ENCODE measurements at regions of chr17 and their contacts with region 1.

Region 1: DNA sequence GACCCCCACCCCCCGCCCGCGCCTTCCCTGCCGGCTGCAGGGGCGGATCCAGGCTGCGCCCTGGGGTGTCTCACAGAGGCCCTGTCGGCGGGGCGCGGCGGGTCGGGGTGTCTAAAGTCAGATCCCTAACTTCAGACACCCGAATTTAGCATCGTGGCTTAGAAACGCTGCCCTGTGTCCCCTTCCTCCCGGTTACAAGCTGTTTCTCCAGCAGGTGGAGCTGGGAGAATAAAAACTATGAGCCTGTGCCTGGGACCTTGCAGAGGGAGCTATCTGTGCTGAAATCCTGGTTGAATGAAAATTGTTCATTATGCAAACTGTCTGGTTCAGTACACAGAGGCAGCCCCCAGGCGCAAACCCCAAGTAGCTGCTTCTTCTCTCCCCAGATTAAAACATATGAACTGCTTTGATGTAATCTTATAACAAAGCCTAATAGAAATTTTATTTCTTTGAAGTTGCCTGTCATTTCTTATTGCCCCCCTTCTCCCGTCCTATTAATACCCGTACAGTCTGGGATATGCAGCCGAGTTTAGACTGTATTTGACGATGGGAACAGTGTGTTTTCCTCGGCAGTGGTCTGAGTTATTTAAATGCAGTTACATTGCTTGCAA is 79.0 kb downstream of the RPA1 start:
- DNase-seq: peak in 5 of 6 donors; percentile 46 to 80 (median 63)
- ATAC-seq: peak; percentile 87 to 99 (median 96)
- H3K4me3 ChIP-seq: peak overlapping the region in 1 of 4 donors; percentile 28
- H3K27ac ChIP-seq: no peak overlapping the region
- H3K4me1 ChIP-seq: peaks cover 0 to 6% (median 0%) of the 10 kb centered on the region in 3 donors
- H3K27me3 ChIP-seq: peaks cover 0 to 17% (median 2%) of the 10 kb centered on the region in 4 donors
- CTCF ChIP-seq: peak; percentile 44 to 70 (median 64)

Region 2: GRCh38 chr17:2029911-2030778 is 121.3 kb after region 1 on chr17 and contains the start of gene DPH1:
- intact Hi-C with region 1: loop called (anchors 5 to 10 kb)
- DNase-seq: peak; percentile 84 to 96 (median 92)
- ATAC-seq: peak; percentile 87 to 92 (median 88)
- H3K4me3 ChIP-seq: peak within 1 kb of the TSS; percentile 96 to 100 (median 98)
- H3K27ac ChIP-seq: peak within 1 kb of the TSS in 3 of 4 donors; percentile 24 to 55 (median 45)
- H3K4me1 ChIP-seq: peaks cover 5 to 13% (median 6%) of the 10 kb centered on the region in 3 donors
- H3K27me3 ChIP-seq: no peaks in the 10 kb centered on the region
- CTCF ChIP-seq: peak in 1 of 4 donors; percentile 11
- total RNA-seq, gene DPH1: 21.8 to 37.7 (median 27.6) TPM

Region 3: GRCh38 chr17:2041561-2042366 is 133.0 kb after region 1 on chr17 and contains the start of gene OVCA2:
- intact Hi-C with region 1: loop called in 2 of 3 experiments (anchors 5 to 10 kb)
- DNase-seq: peak; percentile 95 to 99 (median 96)
- ATAC-seq: peak; percentile 94 to 97 (median 96)
- H3K4me3 ChIP-seq: peak within 1 kb of the TSS; percentile 63 to 81 (median 68)
- H3K27ac ChIP-seq: peak within 1 kb of the TSS; percentile 76 to 89 (median 79)
- H3K4me1 ChIP-seq: peaks cover 0 to 9% (median 0%) of the 10 kb centered on the region in 3 donors
- H3K27me3 ChIP-seq: no peaks in the 10 kb centered on the region
- CTCF ChIP-seq: peak in 1 of 4 donors; percentile 17
- total RNA-seq, gene OVCA2: 10.4 to 20.5 (median 17.9) TPM